K562 (cell line): ENCODE measurements at regions of chr7 and their contacts with region 1.

Region 1: GRCh38 chr7:102985176-102985783 is 72.5 kb downstream of the LRRC17 start:
- DNase-seq: no peak
- ATAC-seq: no peak
- H3K4me3 ChIP-seq: no peak overlapping the region
- H3K27ac ChIP-seq: no peak overlapping the region
- H3K4me1 ChIP-seq: peaks cover 12 to 51% of the 10 kb centered on the region in 2 experiments
- H3K27me3 ChIP-seq: no peaks in the 10 kb centered on the region
- CTCF ChIP-seq: no peak
- EP300 ChIP-seq: no peak
- POLR2A ChIP-seq: no peak
- RAD21 ChIP-seq: no peak

Region 2: GRCh38 chr7:102823390-102824114 is 161.7 kb before region 1 on chr7:
- CTCF ChIA-PET with region 1: no interaction called
- POLR2A ChIA-PET with region 1: no interaction called
- in situ Hi-C with region 1: no loop called
- intact Hi-C with region 1: no loop called
- DNase-seq: no peak
- ATAC-seq: no peak
- H3K4me3 ChIP-seq: no peak overlapping the region
- H3K27ac ChIP-seq: no peak overlapping the region
- H3K4me1 ChIP-seq: peaks cover 0 to 4% of the 10 kb centered on the region in 2 experiments; a peak in 1 of 5 replicates
- H3K27me3 ChIP-seq: no peaks in the 10 kb centered on the region
- CTCF ChIP-seq: no peak
- EP300 ChIP-seq: no peak
- POLR2A ChIP-seq: no peak
- RAD21 ChIP-seq: no peak

Region 3: DNA sequence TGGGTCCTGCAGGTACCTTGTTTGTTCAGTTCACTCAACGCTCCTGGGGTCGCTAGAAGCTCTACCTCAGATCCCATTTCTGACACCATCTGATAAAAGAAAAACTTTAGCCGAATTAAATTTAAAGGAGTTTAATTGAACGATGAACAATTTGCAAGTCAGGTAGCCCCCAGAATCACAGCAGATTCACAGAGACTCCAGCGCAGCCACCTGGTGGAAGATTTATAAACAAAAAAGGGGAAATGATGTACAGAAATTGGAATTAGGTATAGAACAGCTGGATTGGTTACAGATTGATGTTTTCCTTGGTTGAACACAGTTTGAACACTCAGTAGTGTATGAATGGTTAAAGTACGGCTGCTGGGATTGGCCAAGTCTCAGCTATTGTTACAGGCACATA is 66.2 kb after region 1 on chr7:
- CTCF ChIA-PET with region 1: no interaction called
- POLR2A ChIA-PET with region 1: no interaction called
- in situ Hi-C with region 1: loop called (anchors 5 kb)
- intact Hi-C with region 1: loop called (anchors 5 kb)
- DNase-seq: peak in 1 of 4 experiments; percentile 27
- ATAC-seq: peak; percentile 63
- H3K4me3 ChIP-seq: no peak overlapping the region
- H3K27ac ChIP-seq: no peak overlapping the region
- H3K4me1 ChIP-seq: no peaks in the 10 kb centered on the region
- H3K27me3 ChIP-seq: no peaks in the 10 kb centered on the region
- CTCF ChIP-seq: peak; percentile 24 to 52 (median 32); a peak in 4 of 6 replicates
- EP300 ChIP-seq: no peak
- POLR2A ChIP-seq: no peak
- RAD21 ChIP-seq: peak; percentile 38 to 71

Region 4: GRCh38 chr7:103059471-103059870 is 74.2 kb after region 1 on chr7:
- CTCF ChIA-PET with region 1: no interaction called
- POLR2A ChIA-PET with region 1: no interaction called
- in situ Hi-C with region 1: loop called (anchors 5 kb)
- intact Hi-C with region 1: loop called (anchors 5 kb)
- DNase-seq: no peak
- ATAC-seq: no peak
- H3K4me3 ChIP-seq: no peak overlapping the region
- H3K27ac ChIP-seq: no peak overlapping the region
- H3K4me1 ChIP-seq: no peaks in the 10 kb centered on the region
- H3K27me3 ChIP-seq: no peaks in the 10 kb centered on the region
- CTCF ChIP-seq: no peak
- EP300 ChIP-seq: no peak
- POLR2A ChIP-seq: no peak
- RAD21 ChIP-seq: no peak